WTC11 (cell line): ENCODE measurements at regions of chr16 and their contacts with region 1.

Region 1: GRCh38 chr16:10509534-10510025 is 70.8 kb downstream of the EMP2 start:
- DNase-seq: peak; percentile 56
- ATAC-seq: peak; percentile 94
- H3K4me3 Mint-ChIP-seq: no peak overlapping the region
- H3K27ac Mint-ChIP-seq: no peak overlapping the region
- H3K4me1 Mint-ChIP-seq: peaks cover 31% of the 10 kb centered on the region
- H3K27me3 Mint-ChIP-seq: no peaks in the 10 kb centered on the region
- CTCF ChIP-seq: peak; percentile 57

Region 2: DNA sequence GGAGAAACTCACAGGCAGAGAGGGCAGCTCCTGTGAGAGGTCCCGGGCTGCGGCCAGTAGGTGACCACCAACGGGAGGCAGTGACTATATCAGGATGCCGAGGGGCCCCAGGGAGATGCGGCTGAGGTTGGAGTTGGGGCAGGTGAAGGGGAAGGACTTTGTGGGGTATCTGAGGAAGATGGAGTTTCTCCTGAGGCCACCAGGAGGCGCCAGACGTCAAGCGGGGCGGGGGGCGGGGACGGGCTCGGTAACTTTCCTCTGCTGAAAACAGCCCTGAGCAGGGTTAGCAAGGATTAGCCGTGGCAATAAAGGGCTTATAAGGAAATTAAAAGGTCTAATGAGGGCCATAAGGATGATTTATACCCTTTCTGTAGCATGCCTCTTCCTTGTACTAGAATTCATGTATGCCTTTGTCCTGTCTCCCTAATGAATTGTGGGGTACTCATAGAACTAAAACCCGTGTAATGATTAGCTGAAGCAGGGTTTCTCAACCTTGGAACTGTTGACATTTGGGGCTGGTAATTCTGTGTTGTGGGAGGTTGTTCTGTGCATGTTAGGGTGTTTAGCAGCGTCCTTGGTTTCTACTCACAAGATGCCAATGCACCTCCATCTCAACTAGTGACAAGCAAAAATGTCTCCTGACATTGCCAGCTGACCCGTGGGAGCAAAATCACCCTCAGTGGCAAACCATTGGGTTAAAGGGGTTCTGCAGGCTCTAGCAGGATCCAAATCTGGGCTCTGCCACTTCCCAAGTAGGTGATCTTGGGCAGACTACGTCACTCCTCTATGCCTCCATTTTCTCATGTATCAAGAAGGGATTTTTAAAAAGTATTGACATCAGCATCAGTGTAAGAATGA is 252.6 kb before region 1 on chr16:
- CTCF ChIA-PET with region 1: interaction called, 30 read pairs
- POLR2A ChIA-PET with region 1: no interaction called
- DNase-seq: peak; percentile 66
- ATAC-seq: peak; percentile 92
- H3K4me3 Mint-ChIP-seq: 0 out of 2 replicates have a peak overlapping the region, but pooled peaks have one; percentile 12
- H3K27ac Mint-ChIP-seq: no peak overlapping the region
- H3K4me1 Mint-ChIP-seq: peaks cover 12% of the 10 kb centered on the region
- H3K27me3 Mint-ChIP-seq: peaks cover 9% of the 10 kb centered on the region
- CTCF ChIP-seq: peak; percentile 82

Region 3: DNA sequence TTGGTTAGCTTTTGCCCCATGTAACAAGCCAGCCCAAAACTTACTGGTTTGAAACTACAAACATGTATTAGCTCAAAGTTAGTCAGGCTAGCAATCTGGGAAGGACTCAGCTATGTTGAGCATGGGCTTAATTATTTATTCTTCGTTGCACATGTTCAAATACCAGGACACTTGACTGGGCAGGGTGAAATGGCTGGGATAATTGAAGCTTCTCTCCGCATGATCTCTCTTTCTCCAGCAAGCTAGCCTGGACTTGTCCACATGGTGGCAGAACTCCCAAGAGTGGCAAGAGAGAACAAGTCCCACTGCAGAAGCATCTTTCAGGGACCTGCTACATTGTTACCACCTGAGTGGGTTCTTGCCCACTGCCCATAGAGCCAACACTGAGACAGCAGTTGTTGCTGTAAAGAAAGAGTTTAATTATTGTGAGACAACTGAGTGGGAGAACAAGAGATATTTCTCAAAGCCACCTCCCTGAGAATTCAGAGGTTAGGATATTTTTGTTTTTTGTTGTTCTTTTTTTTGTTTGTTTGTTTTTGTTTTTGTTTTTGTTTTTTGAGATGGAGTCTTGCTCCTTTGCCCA is 140.5 kb before region 1 on chr16:
- CTCF ChIA-PET with region 1: interaction called, 14 read pairs
- POLR2A ChIA-PET with region 1: no interaction called
- DNase-seq: no peak
- ATAC-seq: peak; percentile 46; the same call in 1 of the 2 replicates
- H3K4me3 Mint-ChIP-seq: no peak overlapping the region
- H3K27ac Mint-ChIP-seq: no peak overlapping the region
- H3K4me1 Mint-ChIP-seq: 0 out of 2 replicates have a peak, but pooled peaks cover 2% of the 10 kb centered on the region
- H3K27me3 Mint-ChIP-seq: peaks cover 3% of the 10 kb centered on the region; the same call in 1 of the 2 replicates
- CTCF ChIP-seq: no peak

Region 4: GRCh38 chr16:10552998-10553491 is 43.5 kb after region 1 on chr16:
- CTCF ChIA-PET with region 1: no interaction called
- POLR2A ChIA-PET with region 1: no interaction called
- DNase-seq: peak; percentile 69
- ATAC-seq: peak; percentile 100
- H3K4me3 Mint-ChIP-seq: no peak overlapping the region
- H3K27ac Mint-ChIP-seq: no peak overlapping the region
- H3K4me1 Mint-ChIP-seq: peaks cover 7% of the 10 kb centered on the region
- H3K27me3 Mint-ChIP-seq: no peaks in the 10 kb centered on the region
- CTCF ChIP-seq: no peak

Region 5: GRCh38 chr16:10737068-10737625 is 227.6 kb after region 1 on chr16:
- CTCF ChIA-PET with region 1: interaction called, 36 read pairs
- POLR2A ChIA-PET with region 1: no interaction called
- DNase-seq: peak; percentile 59
- ATAC-seq: peak; percentile 64
- H3K4me3 Mint-ChIP-seq: no peak overlapping the region
- H3K27ac Mint-ChIP-seq: no peak overlapping the region
- H3K4me1 Mint-ChIP-seq: no peaks in the 10 kb centered on the region
- H3K27me3 Mint-ChIP-seq: no peaks in the 10 kb centered on the region
- CTCF ChIP-seq: peak; percentile 96